ENCODE measurements at regions of chr1 and their contacts with region 1.

Region 1: GRCh38 chr1:156500797-156501499 is 373 bp upstream of the MEF2D start:
- DNase-seq: peak; percentile 91 to 97 (median 93)
- ATAC-seq: peak; percentile 83
- H3K4me3 ChIP-seq: peak overlapping the region; percentile 81
- H3K4me3 Mint-ChIP-seq: peak overlapping the region; percentile 88 to 97 (median 92)
- H3K27ac ChIP-seq: peak overlapping the region; percentile 99
- H3K27ac Mint-ChIP-seq: peak overlapping the region; percentile 93 to 100 (median 99)
- H3K4me1 ChIP-seq: peaks cover 70 to 71% of the 10 kb centered on the region in 2 donors
- H3K4me1 Mint-ChIP-seq: peaks cover 55 to 75% (median 71%) of the 10 kb centered on the region in 7 donors
- H3K27me3 ChIP-seq: no peaks in the 10 kb centered on the region
- H3K27me3 Mint-ChIP-seq: no peaks in the 10 kb centered on the region

Region 2: DNA sequence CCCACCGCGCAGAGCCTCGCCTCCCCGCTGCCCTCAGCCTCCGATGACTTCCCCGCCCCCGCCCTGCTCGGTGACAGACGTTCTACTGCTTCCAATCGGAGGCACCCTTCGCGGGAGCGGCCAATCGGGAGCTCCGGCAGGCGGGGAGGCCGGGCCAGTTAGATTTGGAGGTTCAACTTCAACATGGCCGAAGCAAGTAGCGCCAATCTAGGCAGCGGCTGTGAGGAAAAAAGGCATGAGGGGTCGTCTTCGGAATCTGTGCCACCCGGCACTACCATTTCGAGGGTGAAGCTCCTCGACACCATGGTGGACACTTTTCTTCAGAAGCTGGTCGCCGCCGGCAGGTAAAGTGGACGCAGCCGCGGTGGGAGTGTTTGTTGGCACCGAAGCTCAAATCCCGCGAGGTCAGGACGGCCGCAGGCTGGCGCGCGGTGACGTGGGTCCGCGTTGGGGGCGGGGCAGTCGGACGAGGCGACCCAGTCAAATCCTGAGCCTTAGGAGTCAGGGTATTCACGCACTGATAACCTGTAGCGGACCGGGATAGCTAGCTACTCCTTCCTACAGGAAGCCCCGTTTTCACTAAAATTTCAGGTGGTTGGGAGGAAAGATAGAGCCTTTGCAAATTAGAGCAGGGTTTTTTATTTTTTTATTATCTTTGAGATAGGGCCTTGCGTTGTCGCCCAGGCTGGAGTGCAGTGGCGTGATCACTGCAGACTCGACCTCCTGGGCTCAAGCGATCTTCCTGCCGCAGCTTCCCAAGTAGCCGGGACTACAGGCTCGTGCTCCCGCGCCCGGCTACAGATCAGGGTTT is 287.9 kb before region 1 on chr1 and contains the start of gene PMF1:
- CTCF ChIA-PET with region 1: no interaction called
- POLR2A ChIA-PET with region 1: interaction called, 8 read pairs
- intact Hi-C with region 1: loop called in 1 of 2 experiments (anchors 10 kb)
- DNase-seq: peak; percentile 83 to 97 (median 95)
- ATAC-seq: peak; percentile 98
- H3K4me3 ChIP-seq: peak within 1 kb of the TSS; percentile 85
- H3K4me3 Mint-ChIP-seq: peak within 1 kb of the TSS; percentile 90 to 99 (median 96)
- H3K27ac ChIP-seq: peak within 1 kb of the TSS; percentile 94
- H3K27ac Mint-ChIP-seq: peak within 1 kb of the TSS; percentile 98 to 100 (median 99)
- H3K4me1 ChIP-seq: peaks cover 8 to 17% of the 10 kb centered on the region in 2 donors
- H3K4me1 Mint-ChIP-seq: peaks cover 20 to 58% (median 41%) of the 10 kb centered on the region in 7 donors
- H3K27me3 ChIP-seq: no peaks in the 10 kb centered on the region
- H3K27me3 Mint-ChIP-seq: no peaks in the 10 kb centered on the region
- total RNA-seq, gene PMF1: 42.2 to 76.1 (median 58.2) TPM

Region 3: GRCh38 chr1:156394835-156395461 is 106.0 kb before region 1 on chr1:
- CTCF ChIA-PET with region 1: no interaction called
- POLR2A ChIA-PET with region 1: no interaction called
- intact Hi-C with region 1: no loop called
- DNase-seq: no peak
- ATAC-seq: no peak
- H3K4me3 ChIP-seq: no peak overlapping the region
- H3K4me3 Mint-ChIP-seq: no peak overlapping the region
- H3K27ac ChIP-seq: no peak overlapping the region
- H3K27ac Mint-ChIP-seq: no peak overlapping the region
- H3K4me1 ChIP-seq: no peaks in the 10 kb centered on the region
- H3K4me1 Mint-ChIP-seq: peaks cover 0 to 4% (median 0%) of the 10 kb centered on the region in 7 donors
- H3K27me3 ChIP-seq: no peaks in the 10 kb centered on the region
- H3K27me3 Mint-ChIP-seq: peaks cover 7 to 26% (median 12%) of the 10 kb centered on the region in 5 donors

Region 4: GRCh38 chr1:156456622-156457465 is 44.1 kb before region 1 on chr1:
- CTCF ChIA-PET with region 1: interaction called, 7 read pairs
- POLR2A ChIA-PET with region 1: interaction called, 125 read pairs
- intact Hi-C with region 1: loop called (anchors 1 kb)
- DNase-seq: peak; percentile 88 to 99 (median 96)
- ATAC-seq: peak; percentile 91
- H3K4me3 ChIP-seq: peak overlapping the region; percentile 87
- H3K4me3 Mint-ChIP-seq: peak overlapping the region; percentile 91 to 97 (median 94)
- H3K27ac ChIP-seq: peak overlapping the region; percentile 97
- H3K27ac Mint-ChIP-seq: peak overlapping the region; percentile 96 to 100 (median 99)
- H3K4me1 ChIP-seq: peaks cover 4 to 6% of the 10 kb centered on the region in 2 donors
- H3K4me1 Mint-ChIP-seq: peaks cover 4 to 23% (median 11%) of the 10 kb centered on the region in 7 donors
- H3K27me3 ChIP-seq: no peaks in the 10 kb centered on the region
- H3K27me3 Mint-ChIP-seq: peaks cover 0 to 10% (median 0%) of the 10 kb centered on the region in 5 donors

Region 5: DNA sequence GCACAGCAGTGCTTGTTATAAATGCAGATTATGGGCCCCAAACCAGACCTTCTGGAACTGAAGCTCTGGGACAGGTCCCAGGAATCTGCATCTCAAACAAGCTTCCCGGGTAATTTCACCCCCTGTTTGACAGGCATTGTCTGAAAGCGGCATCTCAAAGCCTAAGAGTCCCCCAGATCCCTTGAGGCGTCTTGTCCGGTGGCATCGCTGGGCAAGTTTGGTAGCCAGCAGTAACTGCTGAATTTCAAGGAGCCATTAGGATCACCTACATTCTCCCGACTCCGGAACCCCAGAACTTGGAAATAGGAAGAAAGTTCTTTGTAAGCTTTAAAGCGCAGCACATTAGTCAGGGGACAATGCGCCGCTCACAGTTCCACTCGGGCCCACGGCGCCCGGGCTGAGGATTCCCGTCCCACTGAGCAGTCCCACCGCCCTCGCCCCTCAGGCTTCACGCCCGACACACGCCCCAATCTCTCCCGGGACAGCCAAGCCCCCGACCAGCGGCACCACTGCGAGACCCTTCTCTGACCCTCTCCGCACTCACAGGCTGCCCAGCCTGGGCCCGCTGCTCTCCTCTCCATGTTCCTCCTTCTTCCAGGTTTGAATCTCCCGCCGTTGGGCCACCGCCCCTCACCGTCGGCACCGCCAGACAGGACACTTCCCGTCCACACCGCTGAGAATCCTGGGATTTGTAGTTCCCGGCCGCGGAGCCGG is 71.2 kb after region 1 on chr1 and contains the start of gene IQGAP3:
- CTCF ChIA-PET with region 1: no interaction called
- POLR2A ChIA-PET with region 1: interaction called, 5 read pairs
- intact Hi-C with region 1: loop called (anchors 1 to 2 kb)
- DNase-seq: peak; percentile 49 to 74 (median 63)
- ATAC-seq: peak; percentile 93
- H3K4me3 ChIP-seq: peak within 1 kb of the TSS; percentile 41
- H3K4me3 Mint-ChIP-seq: peak within 1 kb of the TSS; percentile 69 to 94 (median 84)
- H3K27ac ChIP-seq: no peak within 1 kb of the TSS
- H3K27ac Mint-ChIP-seq: peak within 1 kb of the TSS in 5 of 9 donors; percentile 38 to 84 (median 59)
- H3K4me1 ChIP-seq: peaks cover 4 to 9% of the 10 kb centered on the region in 2 donors
- H3K4me1 Mint-ChIP-seq: peaks cover 10 to 27% (median 19%) of the 10 kb centered on the region in 7 donors
- H3K27me3 ChIP-seq: peaks cover 0 to 16% of the 10 kb centered on the region in 2 donors
- H3K27me3 Mint-ChIP-seq: peaks cover 16 to 41% (median 32%) of the 10 kb centered on the region in 5 donors
- total RNA-seq, gene IQGAP3: 0.24 to 14.4 TPM in 2 of 5 experiments, not detected in the others

Region 6: DNA sequence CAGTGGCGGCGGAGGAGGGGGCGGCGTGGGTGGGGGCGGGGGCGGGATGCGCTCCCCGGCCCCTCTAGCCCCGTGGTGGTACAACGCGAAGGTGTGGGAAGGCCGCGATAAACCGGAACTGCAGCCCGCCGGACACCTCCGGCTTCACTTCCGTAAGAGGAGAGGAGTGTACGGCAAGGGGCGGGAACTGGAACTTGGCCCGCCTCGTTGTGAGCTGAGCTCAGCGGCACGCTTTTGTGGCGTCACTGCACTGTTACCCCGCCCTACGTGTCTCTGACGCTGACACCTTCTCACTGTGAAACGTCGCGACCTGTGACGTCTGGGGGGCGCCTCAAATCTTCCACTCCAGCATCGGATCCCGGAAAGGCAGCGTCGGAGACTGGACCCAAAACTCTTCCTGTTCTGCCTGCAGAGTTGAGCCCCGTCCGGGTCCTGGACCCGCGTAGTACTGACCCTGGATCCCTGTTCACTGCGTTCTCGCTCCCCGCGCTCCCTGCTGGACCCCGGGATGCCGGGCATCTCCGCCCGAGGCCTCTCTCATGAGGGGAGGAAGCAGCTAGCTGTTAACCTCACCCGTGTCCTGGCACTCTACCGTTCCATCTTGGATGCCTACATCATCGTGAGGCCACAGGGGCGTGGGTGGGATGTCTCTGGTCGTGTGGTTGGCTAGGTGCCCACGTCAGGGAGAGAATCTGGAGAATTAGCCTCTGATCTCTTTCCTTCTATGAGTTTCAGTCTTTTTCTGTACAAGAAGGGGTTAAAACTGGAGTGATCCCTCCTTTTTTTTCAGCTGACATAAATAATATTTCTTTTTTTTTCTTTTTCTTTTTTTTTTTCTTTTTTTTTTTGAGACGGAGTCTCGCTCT is 227.9 kb after region 1 on chr1 and contains the start of gene ISG20L2:
- CTCF ChIA-PET with region 1: interaction called, 3 read pairs
- POLR2A ChIA-PET with region 1: interaction called, 3 read pairs
- intact Hi-C with region 1: loop called (anchors 1 to 10 kb)
- DNase-seq: peak; percentile 76 to 98 (median 94)
- ATAC-seq: peak; percentile 96
- H3K4me3 ChIP-seq: peak within 1 kb of the TSS; percentile 97
- H3K4me3 Mint-ChIP-seq: no peak within 1 kb of the TSS
- H3K27ac ChIP-seq: peak within 1 kb of the TSS; percentile 95
- H3K27ac Mint-ChIP-seq: peak within 1 kb of the TSS in 4 of 9 donors; percentile 94 to 99 (median 98)
- H3K4me1 ChIP-seq: peaks cover 38 to 40% of the 10 kb centered on the region in 2 donors
- H3K4me1 Mint-ChIP-seq: peaks cover 18 to 35% (median 22%) of the 10 kb centered on the region in 7 donors
- H3K27me3 ChIP-seq: no peaks in the 10 kb centered on the region
- H3K27me3 Mint-ChIP-seq: no peaks in the 10 kb centered on the region
- total RNA-seq, gene ISG20L2: 44.7 to 59.9 (median 53.9) TPM

Region 7: DNA sequence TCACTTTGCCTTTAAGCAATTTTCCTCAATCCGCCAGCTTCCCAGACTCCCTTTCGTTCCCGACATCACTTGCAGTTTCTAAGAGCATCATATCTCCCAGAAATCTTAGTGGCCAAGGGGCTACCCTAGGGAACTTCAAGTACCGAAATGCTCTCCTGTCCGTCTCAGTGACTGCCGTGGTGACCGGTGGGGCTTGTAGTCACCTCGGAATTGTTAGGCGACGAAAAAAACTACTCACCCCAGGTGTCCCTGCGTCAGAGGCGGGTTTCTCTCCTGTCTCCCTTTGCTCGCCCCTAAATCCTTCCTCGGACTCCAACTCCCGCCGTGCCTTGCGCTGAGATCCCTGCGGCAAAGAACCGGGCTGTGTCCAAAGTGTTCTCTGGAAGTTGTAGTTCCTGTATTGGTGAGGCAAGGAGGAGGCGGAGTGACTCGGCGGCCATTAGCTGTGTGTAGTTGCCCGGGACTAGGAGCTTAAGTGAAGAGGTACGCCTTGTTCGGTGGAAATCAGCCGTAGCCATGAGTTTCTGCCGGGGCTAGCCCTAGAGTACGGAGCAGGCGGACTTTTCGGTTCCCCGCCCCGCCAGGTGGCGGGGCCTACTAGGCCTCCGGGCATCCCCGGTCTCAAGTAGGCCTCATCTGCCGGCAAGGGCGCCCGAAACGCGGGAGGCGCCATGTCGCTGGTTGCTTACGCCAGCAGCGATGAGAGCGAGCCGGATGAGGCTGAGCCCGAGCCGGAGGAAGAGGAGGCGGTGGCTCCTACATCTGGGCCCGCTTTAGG is 266.3 kb after region 1 on chr1 and contains the start of gene PRCC:
- CTCF ChIA-PET with region 1: no interaction called
- POLR2A ChIA-PET with region 1: interaction called, 8 read pairs
- intact Hi-C with region 1: loop called (anchors 1 kb)
- DNase-seq: peak; percentile 83 to 100 (median 98)
- ATAC-seq: peak; percentile 94
- H3K4me3 ChIP-seq: peak within 1 kb of the TSS; percentile 89
- H3K4me3 Mint-ChIP-seq: no peak within 1 kb of the TSS
- H3K27ac ChIP-seq: peak within 1 kb of the TSS; percentile 98
- H3K27ac Mint-ChIP-seq: peak within 1 kb of the TSS in 3 of 9 donors; percentile 13 to 91 (median 88)
- H3K4me1 ChIP-seq: peaks cover 23 to 36% of the 10 kb centered on the region in 2 donors
- H3K4me1 Mint-ChIP-seq: peaks cover 35 to 46% (median 37%) of the 10 kb centered on the region in 7 donors
- H3K27me3 ChIP-seq: no peaks in the 10 kb centered on the region
- H3K27me3 Mint-ChIP-seq: no peaks in the 10 kb centered on the region
- total RNA-seq, gene PRCC: 53.2 to 88.9 (median 61.7) TPM